ENCODE measurements at regions of chr6 and their contacts with region 1.

Region 1: GRCh38 chr6:1396952-1397868 is 7.8 kb downstream of the FOXF2 start:
- DNase-seq: peak; percentile 61
- ATAC-seq: peak; percentile 89
- H3K4me3 ChIP-seq: no peak overlapping the region
- H3K27ac ChIP-seq: no peak overlapping the region
- H3K4me1 ChIP-seq: peaks cover 11% of the 10 kb centered on the region
- H3K27me3 ChIP-seq: no peaks in the 10 kb centered on the region
- CTCF ChIP-seq: peak; percentile 99

Region 2: GRCh38 chr6:811831-812230 is 585.4 kb before region 1 on chr6:
- CTCF ChIA-PET with region 1: no interaction called
- POLR2A ChIA-PET with region 1: interaction called, 15 read pairs
- in situ Hi-C with region 1: no loop called
- intact Hi-C with region 1: no loop called
- DNase-seq: no peak
- ATAC-seq: no peak
- H3K4me3 ChIP-seq: no peak overlapping the region
- H3K27ac ChIP-seq: no peak overlapping the region
- H3K4me1 ChIP-seq: no peaks in the 10 kb centered on the region
- H3K27me3 ChIP-seq: no peaks in the 10 kb centered on the region
- CTCF ChIP-seq: no peak

Region 3: DNA sequence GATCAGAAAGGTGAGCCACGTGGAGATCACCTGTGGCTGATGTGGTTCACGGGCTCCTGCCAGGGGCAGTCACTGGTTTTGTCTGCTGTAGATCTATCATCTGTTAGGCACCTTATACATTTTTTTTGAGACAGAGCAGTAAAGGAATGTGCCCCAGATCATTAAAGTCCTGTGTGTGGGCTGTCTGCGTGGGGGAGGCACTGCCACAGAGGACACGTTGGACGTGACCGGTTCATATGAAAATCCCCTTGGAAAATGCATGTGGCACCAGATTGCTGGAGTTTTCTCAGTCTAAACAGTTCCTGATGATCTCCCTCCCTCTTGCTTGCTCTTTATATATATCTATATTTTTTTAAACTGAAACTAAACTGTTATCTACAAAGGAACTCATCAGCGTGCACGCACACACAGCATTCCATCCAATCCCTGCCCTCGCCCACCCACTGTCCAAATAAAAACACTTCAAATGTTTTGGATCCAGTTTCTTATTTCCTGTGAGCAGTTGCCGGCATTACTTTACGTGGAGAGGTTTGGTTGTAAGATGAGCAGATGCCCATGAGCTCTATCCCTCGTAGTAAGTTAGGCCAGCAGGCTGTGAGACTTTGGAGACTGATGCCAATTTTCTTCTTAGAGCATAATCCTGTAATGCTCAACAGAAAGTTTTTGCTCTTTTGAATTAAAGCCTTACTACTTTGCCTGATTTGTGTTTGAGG is 542.6 kb before region 1 on chr6:
- CTCF ChIA-PET with region 1: interaction called, 10 read pairs
- POLR2A ChIA-PET with region 1: no interaction called
- in situ Hi-C with region 1: no loop called
- intact Hi-C with region 1: no loop called
- DNase-seq: no peak
- ATAC-seq: no peak
- H3K4me3 ChIP-seq: no peak overlapping the region
- H3K27ac ChIP-seq: no peak overlapping the region
- H3K4me1 ChIP-seq: no peaks in the 10 kb centered on the region
- H3K27me3 ChIP-seq: no peaks in the 10 kb centered on the region
- CTCF ChIP-seq: no peak

Region 4: DNA sequence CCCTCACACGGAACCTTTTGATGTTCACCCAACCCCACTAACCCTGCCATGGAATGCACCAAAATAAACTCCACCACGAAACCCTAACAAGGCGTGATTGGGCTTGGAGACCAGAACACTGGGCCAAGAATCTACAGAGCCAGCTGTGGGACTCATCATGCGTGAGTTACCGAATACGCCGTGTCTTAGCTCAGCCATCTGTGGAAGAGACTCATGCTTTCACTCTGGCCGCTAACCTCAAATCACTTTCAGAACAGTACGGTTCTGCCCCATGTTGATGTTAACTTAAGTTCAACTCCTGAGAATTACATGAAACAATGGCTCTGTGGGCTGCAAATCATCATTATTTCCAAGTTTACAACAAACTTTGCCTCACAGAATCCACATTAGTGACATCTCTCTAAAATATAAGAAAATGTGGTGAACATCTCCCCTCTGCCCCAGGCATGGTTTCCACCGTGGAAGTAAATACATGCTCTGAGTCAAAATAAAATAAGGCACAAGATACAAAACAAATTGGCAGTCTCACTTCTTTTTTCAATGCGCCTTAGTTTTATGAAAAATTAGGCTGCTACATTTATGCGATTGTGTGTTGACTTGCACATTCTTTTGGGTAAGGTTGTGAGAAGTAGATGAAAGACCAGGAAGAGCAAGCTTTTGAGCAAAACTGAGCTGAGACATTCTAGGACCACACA is 395.4 kb before region 1 on chr6:
- CTCF ChIA-PET with region 1: no interaction called
- POLR2A ChIA-PET with region 1: no interaction called
- in situ Hi-C with region 1: no loop called
- intact Hi-C with region 1: no loop called
- DNase-seq: no peak
- ATAC-seq: no peak
- H3K4me3 ChIP-seq: no peak overlapping the region
- H3K27ac ChIP-seq: no peak overlapping the region
- H3K4me1 ChIP-seq: no peaks in the 10 kb centered on the region
- H3K27me3 ChIP-seq: peaks cover 2% of the 10 kb centered on the region; the same call in 1 of the 2 replicates
- CTCF ChIP-seq: no peak

Region 5: DNA sequence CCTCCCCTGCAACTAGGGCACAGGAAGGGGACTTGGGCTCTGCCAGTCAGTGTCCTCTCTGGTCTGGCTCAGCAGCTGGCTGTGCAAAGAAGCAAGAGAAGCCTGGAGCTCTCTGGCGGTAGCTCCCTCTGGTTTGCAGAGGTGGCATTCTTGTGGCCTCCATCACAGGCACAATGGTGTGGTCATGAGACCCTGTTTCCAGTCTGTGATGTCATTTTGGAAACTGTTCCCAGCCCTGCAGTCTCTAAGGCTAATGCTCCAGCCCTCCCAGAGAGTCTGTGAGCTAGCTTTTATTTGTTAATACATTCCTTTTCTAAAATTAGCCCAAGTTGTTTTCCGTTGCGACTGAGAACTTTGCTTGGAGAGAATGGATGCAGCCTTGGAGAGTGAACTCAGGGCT is 154.8 kb before region 1 on chr6:
- CTCF ChIA-PET with region 1: no interaction called
- POLR2A ChIA-PET with region 1: no interaction called
- in situ Hi-C with region 1: no loop called
- intact Hi-C with region 1: no loop called
- DNase-seq: no peak
- ATAC-seq: no peak
- H3K4me3 ChIP-seq: no peak overlapping the region
- H3K27ac ChIP-seq: no peak overlapping the region
- H3K4me1 ChIP-seq: no peaks in the 10 kb centered on the region
- H3K27me3 ChIP-seq: no peaks in the 10 kb centered on the region; the same call in 1 of the 2 replicates
- CTCF ChIP-seq: no peak

Region 6: DNA sequence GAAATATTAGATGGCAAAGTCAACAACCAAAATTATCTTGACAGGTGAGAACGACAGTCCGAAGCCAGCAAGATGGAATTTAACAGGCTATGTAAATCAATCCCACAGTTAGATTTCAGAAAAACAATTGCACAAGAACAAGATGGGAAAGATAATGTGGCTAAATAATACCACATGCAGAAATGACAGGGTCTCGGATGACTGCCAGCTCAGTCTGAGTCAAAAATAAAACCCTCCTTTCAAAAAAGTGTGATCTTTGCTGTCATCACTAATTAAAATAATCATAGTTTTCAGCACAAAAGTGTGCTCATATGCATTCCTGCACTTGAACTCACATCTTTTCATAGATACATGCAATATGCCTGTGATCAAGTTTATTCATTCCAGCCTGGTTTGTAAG is 59.4 kb before region 1 on chr6:
- CTCF ChIA-PET with region 1: no interaction called
- POLR2A ChIA-PET with region 1: no interaction called
- in situ Hi-C with region 1: no loop called
- intact Hi-C with region 1: no loop called
- DNase-seq: no peak
- ATAC-seq: no peak
- H3K4me3 ChIP-seq: no peak overlapping the region
- H3K27ac ChIP-seq: peak overlapping the region; percentile 37; the same call in 1 of the 2 replicates
- H3K4me1 ChIP-seq: peaks cover 40% of the 10 kb centered on the region
- H3K27me3 ChIP-seq: no peaks in the 10 kb centered on the region
- CTCF ChIP-seq: no peak

Region 7: GRCh38 chr6:1367771-1368170 is 29.4 kb before region 1 on chr6:
- CTCF ChIA-PET with region 1: interaction called, 10 read pairs
- POLR2A ChIA-PET with region 1: no interaction called
- in situ Hi-C with region 1: no loop called
- intact Hi-C with region 1: no loop called
- DNase-seq: no peak
- ATAC-seq: no peak
- H3K4me3 ChIP-seq: no peak overlapping the region
- H3K27ac ChIP-seq: no peak overlapping the region
- H3K4me1 ChIP-seq: no peaks in the 10 kb centered on the region
- H3K27me3 ChIP-seq: no peaks in the 10 kb centered on the region
- CTCF ChIP-seq: no peak